Astrocyte of the cerebellum (primary cell): ENCODE measurements at regions of chr13 and their contacts with region 1.

Region 1: DNA sequence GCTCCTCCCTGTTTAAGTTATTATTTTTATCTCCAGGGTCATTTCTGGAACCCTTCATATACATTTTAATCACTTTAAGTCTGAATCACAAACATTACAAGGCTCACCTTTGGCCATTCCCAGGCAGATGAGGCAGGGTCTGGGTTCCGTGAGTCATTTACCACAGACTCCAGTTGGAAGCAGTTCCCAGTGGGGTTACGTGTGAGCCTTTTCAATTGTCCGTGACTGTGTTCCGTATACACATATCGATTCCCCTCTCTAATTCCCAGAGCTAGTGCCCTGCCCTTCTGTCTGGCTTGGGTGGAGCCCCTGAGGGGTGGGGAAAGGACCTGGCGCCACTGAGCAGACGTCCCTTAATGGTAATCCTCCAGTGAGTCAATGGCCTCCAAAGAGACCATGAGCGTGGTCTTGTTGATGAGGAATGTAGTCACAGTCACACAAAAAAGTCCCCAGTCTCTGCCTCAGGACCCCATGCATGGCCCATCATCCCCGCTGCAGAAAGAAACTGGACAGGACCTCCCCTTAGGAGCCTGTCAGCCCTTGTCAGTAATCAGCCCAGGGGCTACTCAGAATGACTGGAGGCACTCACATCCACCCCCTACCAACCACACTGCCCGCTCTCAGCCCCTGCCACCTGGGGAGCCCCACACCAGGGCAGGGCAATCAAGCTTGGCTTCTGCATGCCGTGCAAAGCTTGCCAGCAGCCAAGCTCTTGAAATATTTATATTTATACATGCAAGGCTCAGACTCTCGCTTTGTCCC is 144.4 kb downstream of the ZIC5 start:
- DNase-seq: peak; percentile 22
- H3K4me3 ChIP-seq: no peak overlapping the region
- CTCF ChIP-seq: no peak

Region 2: DNA sequence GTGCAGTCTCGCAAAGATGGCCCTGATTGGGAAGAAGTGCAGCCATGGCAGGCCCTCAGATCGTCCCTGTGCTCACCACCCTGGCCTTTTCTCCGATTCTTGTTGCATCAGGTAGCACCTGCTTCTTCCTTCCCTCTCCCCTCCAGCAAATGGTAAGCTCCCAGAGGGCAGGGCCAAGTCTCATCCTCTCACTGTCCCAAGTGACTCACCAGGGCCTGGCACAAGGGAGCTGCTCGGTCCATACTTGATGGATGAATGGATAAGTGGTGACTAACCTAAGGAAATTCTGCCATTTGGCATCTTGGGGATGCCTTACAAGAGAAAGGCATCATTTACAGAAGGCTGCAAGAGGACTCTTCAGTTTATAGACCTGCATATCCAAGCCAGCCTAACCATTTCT is 59.5 kb after region 1 on chr13:
- in situ Hi-C with region 1: loop called (anchors 5 kb)
- DNase-seq: no peak
- H3K4me3 ChIP-seq: no peak overlapping the region
- CTCF ChIP-seq: no peak

Region 3: DNA sequence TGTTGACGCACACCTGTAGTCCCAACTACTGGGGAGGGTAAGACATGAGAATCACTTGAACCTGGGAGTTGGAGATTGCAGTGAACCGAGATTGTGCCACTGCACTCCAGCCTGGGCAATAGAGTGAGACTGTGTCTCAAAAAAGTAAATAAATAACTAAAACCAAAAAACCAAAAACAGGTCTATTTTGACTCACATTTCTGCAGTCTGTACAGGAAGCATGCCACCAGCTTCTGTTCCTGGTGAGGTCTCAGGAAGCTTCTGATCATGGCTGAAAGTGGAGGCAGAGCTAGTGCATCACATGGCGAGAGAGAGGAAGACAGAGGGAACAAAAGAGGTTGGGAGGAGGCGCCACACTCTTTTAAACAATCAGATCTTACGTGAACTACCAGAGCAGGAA is 1767.7 kb after region 1 on chr13:
- in situ Hi-C with region 1: no loop called
- DNase-seq: no peak
- H3K4me3 ChIP-seq: no peak overlapping the region
- CTCF ChIP-seq: no peak